Activated T-helper 2 cell treated with anti-CD3 and anti-CD28 coated beads, Interferon-gamma antibody, Interleukin-2, Interleukin-4, amounts not matched to agents 10 μg/mL and 5 μg/mL and 100 μg/mL, durations not matched to agents 14 hours and 24 hours and 36 hours (primary cell): ENCODE measurements at regions of chr20 and their contacts with region 1.

Region 1: GRCh38 chr20:47379433-47380150 is 23.1 kb upstream of the ZMYND8 start:
- DNase-seq: no peak
- H3K4me3 Mint-ChIP-seq: no peak overlapping the region
- H3K27ac Mint-ChIP-seq: peak overlapping the region; percentile 44
- H3K4me1 Mint-ChIP-seq: peaks cover 15% of the 10 kb centered on the region
- H3K27me3 Mint-ChIP-seq: no peaks in the 10 kb centered on the region

Region 2: GRCh38 chr20:47196091-47197081 is 183.2 kb before region 1 on chr20:
- intact Hi-C with region 1: loop called (anchors 1 kb)
- DNase-seq: peak; percentile 69
- H3K4me3 Mint-ChIP-seq: no peak overlapping the region
- H3K27ac Mint-ChIP-seq: no peak overlapping the region
- H3K4me1 Mint-ChIP-seq: peaks cover 18% of the 10 kb centered on the region
- H3K27me3 Mint-ChIP-seq: peaks cover 12% of the 10 kb centered on the region

Region 3: GRCh38 chr20:47317127-47317895 is 62.3 kb before region 1 on chr20:
- intact Hi-C with region 1: loop called (anchors 5 kb)
- DNase-seq: peak; percentile 38
- H3K4me3 Mint-ChIP-seq: no peak overlapping the region
- H3K27ac Mint-ChIP-seq: peak overlapping the region; percentile 87
- H3K4me1 Mint-ChIP-seq: peaks cover 51% of the 10 kb centered on the region
- H3K27me3 Mint-ChIP-seq: no peaks in the 10 kb centered on the region